CD4-positive, alpha-beta T cell (primary cell): ENCODE measurements at regions of chr11 and their contacts with region 1.

Region 1: DNA sequence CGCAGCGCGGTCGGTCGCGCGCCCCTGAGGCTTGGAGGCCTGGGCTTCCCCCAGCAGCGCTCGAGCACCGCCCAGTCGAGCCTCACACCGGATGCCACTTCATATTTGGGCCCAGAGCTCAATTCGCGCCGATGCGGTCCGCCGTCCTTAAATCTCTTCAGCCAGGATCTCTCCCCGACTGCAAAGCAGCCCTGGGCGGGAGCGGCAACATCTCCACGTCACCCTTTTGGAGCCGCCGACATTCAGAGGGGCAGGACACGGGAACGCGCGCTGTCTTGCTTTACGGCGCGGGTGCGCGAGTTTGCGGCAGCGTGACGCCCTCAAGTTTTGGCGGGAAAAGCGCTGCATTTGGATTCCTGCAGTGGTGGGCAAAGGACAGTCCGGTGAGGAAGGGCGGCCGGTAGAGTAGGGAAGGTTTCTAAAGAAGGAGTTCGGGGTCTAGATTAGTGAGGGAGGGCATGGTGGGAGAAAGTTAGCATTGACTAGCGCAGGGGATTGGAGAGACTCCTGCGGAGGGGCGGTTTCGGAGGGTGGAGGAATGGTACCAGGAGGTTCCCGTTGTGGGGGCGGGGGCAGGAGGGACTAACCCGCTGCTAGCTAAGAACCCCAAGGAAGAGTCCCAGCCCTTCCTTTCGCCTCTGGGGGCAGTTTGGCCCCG is 796 bp downstream of the CHEK1 start:
- DNase-seq: peak; percentile 66 to 91 (median 78)
- ATAC-seq: peak; percentile 89
- H3K4me3 ChIP-seq: peak overlapping the region; percentile 87
- H3K4me3 Mint-ChIP-seq: peak overlapping the region; percentile 100
- H3K27ac ChIP-seq: peak overlapping the region; percentile 94 to 98
- H3K27ac Mint-ChIP-seq: peak overlapping the region; percentile 66
- H3K4me1 ChIP-seq: peaks cover 19% of the 10 kb centered on the region
- H3K4me1 Mint-ChIP-seq: peaks cover 22% of the 10 kb centered on the region
- H3K27me3 ChIP-seq: no peaks in the 10 kb centered on the region
- H3K27me3 Mint-ChIP-seq: no peaks in the 10 kb centered on the region
- CTCF ChIP-seq: no peak

Region 2: GRCh38 chr11:125481531-125481930 is 144.2 kb before region 1 on chr11:
- CTCF ChIA-PET with region 1: no interaction called
- POLR2A ChIA-PET with region 1: no interaction called
- intact Hi-C with region 1: no loop called
- DNase-seq: no peak
- ATAC-seq: no peak
- H3K4me3 ChIP-seq: no peak overlapping the region
- H3K4me3 Mint-ChIP-seq: no peak overlapping the region
- H3K27ac ChIP-seq: no peak overlapping the region
- H3K27ac Mint-ChIP-seq: no peak overlapping the region
- H3K4me1 ChIP-seq: no peaks in the 10 kb centered on the region
- H3K4me1 Mint-ChIP-seq: no peaks in the 10 kb centered on the region
- H3K27me3 ChIP-seq: no peaks in the 10 kb centered on the region
- H3K27me3 Mint-ChIP-seq: peaks cover 16% of the 10 kb centered on the region
- CTCF ChIP-seq: no peak

Region 3: GRCh38 chr11:125568970-125569914 is 56.5 kb before region 1 on chr11 and contains the start of gene EI24:
- CTCF ChIA-PET with region 1: interaction called, 5 read pairs
- POLR2A ChIA-PET with region 1: interaction called, 15 read pairs
- intact Hi-C with region 1: loop called in 1 of 2 experiments (anchors 1 kb)
- DNase-seq: peak; percentile 76 to 95 (median 86)
- ATAC-seq: peak; percentile 94
- H3K4me3 ChIP-seq: peak within 1 kb of the TSS; percentile 80
- H3K4me3 Mint-ChIP-seq: peak within 1 kb of the TSS; percentile 95
- H3K27ac ChIP-seq: peak within 1 kb of the TSS; percentile 68 to 74
- H3K27ac Mint-ChIP-seq: peak within 1 kb of the TSS; percentile 84
- H3K4me1 ChIP-seq: peaks cover 18% of the 10 kb centered on the region
- H3K4me1 Mint-ChIP-seq: peaks cover 26% of the 10 kb centered on the region
- H3K27me3 ChIP-seq: no peaks in the 10 kb centered on the region
- H3K27me3 Mint-ChIP-seq: no peaks in the 10 kb centered on the region
- CTCF ChIP-seq: peak; percentile 76
- total RNA-seq, gene EI24: 21.0 to 22.8 TPM

Region 4: DNA sequence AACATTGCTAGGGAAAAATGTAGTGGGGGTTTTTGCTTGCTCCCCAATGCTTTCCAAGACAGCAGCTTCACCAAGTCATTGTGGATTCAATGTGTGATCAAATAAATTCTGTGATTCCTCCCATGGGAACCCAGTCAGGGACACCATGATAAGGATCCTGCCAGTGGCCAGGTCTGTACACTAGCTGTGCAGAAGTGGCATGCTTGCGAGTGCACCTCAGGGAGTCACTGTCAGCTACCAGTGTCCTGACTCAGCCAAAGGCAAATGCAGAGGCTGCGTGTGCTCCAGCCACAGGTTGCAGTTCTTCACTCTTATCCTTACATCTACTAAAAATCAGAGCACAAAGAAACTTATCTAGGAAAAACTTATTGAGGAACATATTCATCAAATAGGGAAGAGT is 64.2 kb after region 1 on chr11:
- CTCF ChIA-PET with region 1: no interaction called
- POLR2A ChIA-PET with region 1: no interaction called
- intact Hi-C with region 1: no loop called
- DNase-seq: no peak
- ATAC-seq: no peak
- H3K4me3 ChIP-seq: no peak overlapping the region
- H3K4me3 Mint-ChIP-seq: no peak overlapping the region
- H3K27ac ChIP-seq: no peak overlapping the region
- H3K27ac Mint-ChIP-seq: no peak overlapping the region
- H3K4me1 ChIP-seq: no peaks in the 10 kb centered on the region
- H3K4me1 Mint-ChIP-seq: no peaks in the 10 kb centered on the region
- H3K27me3 ChIP-seq: no peaks in the 10 kb centered on the region
- H3K27me3 Mint-ChIP-seq: no peaks in the 10 kb centered on the region
- CTCF ChIP-seq: no peak

Region 5: DNA sequence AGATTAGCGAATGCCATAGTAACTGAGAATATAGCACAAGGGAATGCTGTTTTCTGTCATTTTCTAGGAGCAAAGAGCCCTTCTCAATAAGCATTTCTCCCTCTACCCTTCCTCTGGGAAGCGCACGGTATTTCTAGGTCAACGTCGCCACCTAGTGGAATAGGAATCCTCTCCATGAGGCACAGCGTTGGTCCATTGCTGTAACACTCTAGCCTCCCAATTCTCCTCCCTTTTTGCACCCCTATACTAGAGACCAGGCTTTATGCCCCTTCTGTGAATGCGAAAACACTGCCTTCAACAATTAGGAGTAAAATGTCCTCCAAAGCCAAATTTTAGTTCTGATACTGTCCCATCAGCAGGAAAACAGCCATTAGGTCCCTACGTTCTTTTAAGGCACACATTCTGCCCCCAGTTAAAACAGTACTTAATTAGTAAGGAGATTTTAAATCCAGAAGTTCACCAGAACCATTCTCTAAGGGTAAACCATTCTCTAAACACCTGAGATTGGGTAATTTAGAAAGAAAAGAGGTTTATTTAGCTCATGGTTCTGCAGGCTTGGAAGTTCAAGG is 248.9 kb after region 1 on chr11:
- CTCF ChIA-PET with region 1: no interaction called
- POLR2A ChIA-PET with region 1: no interaction called
- intact Hi-C with region 1: loop called in 1 of 2 experiments (anchors 5 kb)
- DNase-seq: peak in 9 of 14 experiments; percentile 7 to 70 (median 32)
- ATAC-seq: peak; percentile 44
- H3K4me3 ChIP-seq: no peak overlapping the region
- H3K4me3 Mint-ChIP-seq: no peak overlapping the region
- H3K27ac ChIP-seq: no peak overlapping the region
- H3K27ac Mint-ChIP-seq: no peak overlapping the region
- H3K4me1 ChIP-seq: no peaks in the 10 kb centered on the region
- H3K4me1 Mint-ChIP-seq: no peaks in the 10 kb centered on the region
- H3K27me3 ChIP-seq: no peaks in the 10 kb centered on the region
- H3K27me3 Mint-ChIP-seq: peaks cover 10% of the 10 kb centered on the region
- CTCF ChIP-seq: peak; percentile 76

Region 6: GRCh38 chr11:125902927-125903710 is 277.4 kb after region 1 on chr11 and contains the start of gene PUS3:
- CTCF ChIA-PET with region 1: no interaction called
- POLR2A ChIA-PET with region 1: interaction called, 7 read pairs
- intact Hi-C with region 1: loop called in 1 of 2 experiments (anchors 5 kb)
- DNase-seq: peak; percentile 75 to 92 (median 84)
- ATAC-seq: peak; percentile 93
- H3K4me3 ChIP-seq: peak within 1 kb of the TSS; percentile 86
- H3K4me3 Mint-ChIP-seq: peak within 1 kb of the TSS; percentile 95
- H3K27ac ChIP-seq: peak within 1 kb of the TSS; percentile 55
- H3K27ac Mint-ChIP-seq: peak within 1 kb of the TSS; percentile 88
- H3K4me1 ChIP-seq: peaks cover 29% of the 10 kb centered on the region
- H3K4me1 Mint-ChIP-seq: peaks cover 46% of the 10 kb centered on the region
- H3K27me3 ChIP-seq: peaks cover 9 to 27% of the 10 kb centered on the region in 2 experiments
- H3K27me3 Mint-ChIP-seq: peaks cover 41% of the 10 kb centered on the region
- CTCF ChIP-seq: no peak
- total RNA-seq, gene PUS3: 6.0 to 7.3 TPM

Region 7: GRCh38 chr11:126194121-126194543 is 568.4 kb after region 1 on chr11:
- CTCF ChIA-PET with region 1: interaction called, 3 read pairs
- POLR2A ChIA-PET with region 1: no interaction called
- intact Hi-C with region 1: loop called in 1 of 2 experiments (anchors 10 kb)
- DNase-seq: peak in 7 of 14 experiments; percentile 20 to 62 (median 41)
- ATAC-seq: no peak
- H3K4me3 ChIP-seq: no peak overlapping the region
- H3K4me3 Mint-ChIP-seq: no peak overlapping the region
- H3K27ac ChIP-seq: no peak overlapping the region
- H3K27ac Mint-ChIP-seq: no peak overlapping the region
- H3K4me1 ChIP-seq: no peaks in the 10 kb centered on the region
- H3K4me1 Mint-ChIP-seq: no peaks in the 10 kb centered on the region
- H3K27me3 ChIP-seq: no peaks in the 10 kb centered on the region
- H3K27me3 Mint-ChIP-seq: no peaks in the 10 kb centered on the region
- CTCF ChIP-seq: peak; percentile 76

Region 8: DNA sequence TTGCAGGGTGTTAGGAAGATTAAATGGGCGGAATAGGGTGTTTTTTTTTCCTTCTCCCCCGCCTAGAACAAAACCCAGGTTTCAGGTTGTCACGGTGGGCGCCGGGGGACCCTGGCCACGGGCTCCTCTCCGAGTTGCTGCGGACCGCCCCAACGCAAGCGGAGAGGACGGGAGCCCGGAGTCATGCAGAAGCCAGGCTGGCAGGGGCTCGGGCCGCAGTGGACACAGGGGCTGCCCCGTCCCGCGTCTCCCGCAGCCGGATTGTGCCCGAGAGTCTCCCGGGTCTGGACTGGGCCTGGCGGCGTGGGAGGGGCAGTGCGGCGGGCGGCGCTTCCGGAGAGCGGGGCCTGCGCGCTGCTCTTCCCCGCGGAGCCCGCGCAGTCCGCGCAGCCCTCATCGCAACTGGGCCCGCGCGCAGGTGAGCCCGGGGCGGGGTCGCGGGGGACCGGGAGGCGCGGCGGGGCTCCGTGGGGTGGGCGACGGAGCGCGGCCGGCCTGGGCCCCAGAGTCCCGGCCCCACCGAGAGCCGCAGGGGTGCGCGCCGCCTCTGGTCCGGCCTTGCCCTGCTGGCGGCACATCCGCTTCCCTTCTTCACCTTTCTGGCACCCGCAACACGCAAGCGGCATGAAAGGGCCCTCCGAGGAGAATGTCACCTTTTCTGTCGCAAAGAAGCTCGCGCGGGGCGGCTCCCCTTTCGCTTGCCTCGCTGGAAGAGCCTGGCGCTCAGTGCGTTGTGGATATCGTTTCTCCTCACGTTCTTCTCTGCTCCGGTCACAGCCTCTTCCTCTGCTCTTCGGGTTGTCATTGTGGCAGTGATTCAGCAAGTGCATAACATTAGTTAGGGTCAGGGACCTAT is 657.2 kb after region 1 on chr11 and contains the start of gene TIRAP:
- CTCF ChIA-PET with region 1: no interaction called
- POLR2A ChIA-PET with region 1: no interaction called
- intact Hi-C with region 1: loop called in 1 of 2 experiments (anchors 10 kb)
- DNase-seq: peak; percentile 47 to 84 (median 58)
- ATAC-seq: peak; percentile 54
- H3K4me3 ChIP-seq: peak within 1 kb of the TSS; percentile 89
- H3K4me3 Mint-ChIP-seq: peak within 1 kb of the TSS; percentile 95
- H3K27ac ChIP-seq: peak within 1 kb of the TSS; percentile 80 to 89
- H3K27ac Mint-ChIP-seq: peak within 1 kb of the TSS; percentile 99
- H3K4me1 ChIP-seq: peaks cover 56% of the 10 kb centered on the region
- H3K4me1 Mint-ChIP-seq: peaks cover 59% of the 10 kb centered on the region
- H3K27me3 ChIP-seq: no peaks in the 10 kb centered on the region
- H3K27me3 Mint-ChIP-seq: no peaks in the 10 kb centered on the region
- CTCF ChIP-seq: no peak
- total RNA-seq, gene TIRAP: 7.7 to 7.9 TPM